ENCODE measurements at regions of chr17 and their contacts with region 1.

Region 1: DNA sequence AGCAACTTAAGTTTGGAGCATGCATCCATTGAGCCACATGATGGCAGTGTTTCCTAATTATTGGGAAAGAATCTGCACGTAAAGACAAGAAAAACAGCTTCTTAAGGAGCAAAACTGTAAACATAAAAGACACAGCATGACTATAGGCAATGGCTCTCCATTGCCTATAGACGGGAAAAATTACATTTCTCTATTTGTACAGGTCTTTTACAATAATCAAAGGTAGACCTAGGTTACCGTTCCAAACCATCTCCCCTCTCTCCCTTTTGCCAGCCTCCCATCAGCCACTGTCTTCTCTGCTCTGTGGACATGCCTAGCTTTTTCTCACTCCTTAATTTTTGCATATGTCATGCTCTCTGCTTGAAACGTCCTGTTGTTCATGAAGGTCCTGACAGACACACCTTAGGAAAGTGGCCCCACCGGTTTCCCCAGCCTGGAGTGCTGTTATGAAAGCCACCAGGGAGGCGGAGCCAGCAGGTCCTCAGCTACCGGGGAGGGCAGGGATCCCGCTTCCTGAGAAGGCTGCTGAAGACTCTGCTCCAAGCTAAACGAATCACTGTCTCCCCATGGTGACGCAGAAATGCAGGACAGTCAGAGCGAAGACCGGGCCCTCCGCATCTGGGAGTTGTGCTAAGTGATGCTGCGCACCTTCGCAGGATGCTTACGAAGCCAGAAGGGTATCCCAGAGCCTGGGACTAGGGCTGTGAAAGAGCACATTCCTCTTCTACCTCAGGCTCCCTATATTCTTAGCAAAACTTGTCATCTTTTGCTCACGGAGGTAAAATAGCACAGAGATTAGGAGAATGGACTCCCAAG is 2.2 kb upstream of the SLC16A11 start:
- DNase-seq: peak; percentile 77
- H3K4me3 Mint-ChIP-seq: no peak overlapping the region
- H3K27ac Mint-ChIP-seq: peak overlapping the region; percentile 32
- H3K4me1 Mint-ChIP-seq: peaks cover 11% of the 10 kb centered on the region
- H3K27me3 Mint-ChIP-seq: no peaks in the 10 kb centered on the region
- CTCF ChIP-seq: peak; percentile 79

Region 2: GRCh38 chr17:7060165-7060891 is 14.2 kb after region 1 on chr17:
- CTCF ChIA-PET with region 1: interaction called, 22 read pairs
- POLR2A ChIA-PET with region 1: no interaction called
- intact Hi-C with region 1: no loop called
- DNase-seq: peak; percentile 90
- H3K4me3 Mint-ChIP-seq: peak overlapping the region; percentile 61
- H3K27ac Mint-ChIP-seq: peak overlapping the region; percentile 92
- H3K4me1 Mint-ChIP-seq: peaks cover 28% of the 10 kb centered on the region
- H3K27me3 Mint-ChIP-seq: no peaks in the 10 kb centered on the region
- CTCF ChIP-seq: no peak

Region 3: GRCh38 chr17:7141824-7142223 is 95.7 kb after region 1 on chr17:
- CTCF ChIA-PET with region 1: interaction called, 124 read pairs
- POLR2A ChIA-PET with region 1: interaction called, 10 read pairs
- intact Hi-C with region 1: no loop called
- DNase-seq: no peak
- H3K4me3 Mint-ChIP-seq: no peak overlapping the region
- H3K27ac Mint-ChIP-seq: no peak overlapping the region
- H3K4me1 Mint-ChIP-seq: no peaks in the 10 kb centered on the region
- H3K27me3 Mint-ChIP-seq: peaks cover 35% of the 10 kb centered on the region
- CTCF ChIP-seq: no peak

Region 4: DNA sequence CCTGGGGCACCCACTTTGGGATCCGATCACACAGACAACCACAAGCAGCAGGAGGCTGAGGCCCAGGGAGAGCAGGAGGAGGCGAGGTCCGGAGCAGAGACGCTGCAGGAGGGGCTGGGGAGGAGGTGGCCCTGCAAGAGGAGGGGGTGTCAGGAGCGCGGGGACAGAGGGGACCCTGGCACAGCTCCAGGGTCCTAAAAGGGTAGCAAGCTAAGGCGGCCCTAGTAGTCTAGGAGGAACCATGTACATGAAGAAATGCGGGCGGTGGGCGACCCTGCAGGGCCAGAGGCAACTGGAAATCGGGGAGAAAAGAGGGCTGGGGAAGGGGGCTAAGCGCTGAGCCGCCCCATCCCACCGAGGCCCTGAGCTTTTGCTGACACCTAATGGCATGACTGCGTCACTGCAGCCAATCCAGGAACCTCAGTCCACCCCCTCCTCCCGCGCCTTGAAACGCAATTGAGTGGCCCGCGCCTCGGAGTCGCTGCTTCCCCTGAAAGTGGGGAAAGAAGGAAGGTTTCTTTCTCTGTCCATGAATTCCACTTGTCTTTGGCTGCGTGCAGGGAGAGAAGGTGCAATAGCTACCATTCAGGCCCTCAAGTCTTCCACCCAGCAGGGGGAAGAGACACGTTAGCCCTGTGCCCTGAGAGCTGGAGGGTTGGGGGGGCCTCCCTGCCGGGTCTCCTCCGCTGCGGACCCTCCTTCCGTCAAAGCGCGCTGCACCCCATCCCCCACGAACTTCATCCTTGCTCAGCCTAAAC is 131.3 kb after region 1 on chr17:
- CTCF ChIA-PET with region 1: interaction called, 33 read pairs
- POLR2A ChIA-PET with region 1: interaction called, 4 read pairs
- intact Hi-C with region 1: no loop called
- DNase-seq: peak; percentile 66
- H3K4me3 Mint-ChIP-seq: peak overlapping the region; percentile 61
- H3K27ac Mint-ChIP-seq: no peak overlapping the region
- H3K4me1 Mint-ChIP-seq: no peaks in the 10 kb centered on the region
- H3K27me3 Mint-ChIP-seq: no peaks in the 10 kb centered on the region
- CTCF ChIP-seq: peak; percentile 88

Region 5: DNA sequence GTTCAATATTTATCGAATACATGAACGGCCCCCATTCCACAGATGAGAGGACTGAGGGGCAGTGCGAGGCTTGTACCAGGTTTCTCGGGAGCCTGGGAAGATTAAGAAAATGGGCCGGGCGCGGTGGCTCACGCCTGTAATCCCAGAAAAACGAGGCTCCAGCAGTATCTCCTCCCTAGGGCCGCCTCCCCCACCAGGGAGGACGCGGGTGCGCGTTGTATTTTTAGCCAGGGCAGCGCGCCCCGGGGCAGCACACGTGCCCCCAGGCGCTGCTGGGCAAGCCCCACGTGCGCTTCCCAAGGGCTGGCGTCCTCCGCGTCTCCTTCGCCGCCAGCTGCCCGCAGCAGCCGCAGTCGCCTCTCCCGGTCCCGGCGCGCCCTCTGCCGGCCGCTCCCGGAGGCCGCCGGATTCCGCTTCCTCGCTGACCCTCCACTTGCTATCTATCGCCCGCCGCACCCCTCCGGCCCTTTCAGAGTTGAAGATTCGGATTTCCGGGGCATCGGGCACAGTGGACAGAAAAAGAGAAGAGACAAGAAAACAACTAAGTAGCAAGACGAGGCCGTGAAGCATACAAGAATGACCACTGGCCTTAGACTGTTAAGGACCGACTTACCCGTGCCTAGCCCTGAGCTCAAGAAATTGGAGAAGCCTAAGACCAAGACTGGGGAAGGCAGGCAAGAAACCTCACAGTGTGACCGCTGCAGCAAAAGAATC is 250.2 kb after region 1 on chr17:
- CTCF ChIA-PET with region 1: interaction called, 12 read pairs
- POLR2A ChIA-PET with region 1: no interaction called
- intact Hi-C with region 1: loop called (anchors 5 kb)
- DNase-seq: peak; percentile 73
- H3K4me3 Mint-ChIP-seq: no peak overlapping the region
- H3K27ac Mint-ChIP-seq: no peak overlapping the region
- H3K4me1 Mint-ChIP-seq: peaks cover 17% of the 10 kb centered on the region
- H3K27me3 Mint-ChIP-seq: no peaks in the 10 kb centered on the region
- CTCF ChIP-seq: peak; percentile 91

Region 6: DNA sequence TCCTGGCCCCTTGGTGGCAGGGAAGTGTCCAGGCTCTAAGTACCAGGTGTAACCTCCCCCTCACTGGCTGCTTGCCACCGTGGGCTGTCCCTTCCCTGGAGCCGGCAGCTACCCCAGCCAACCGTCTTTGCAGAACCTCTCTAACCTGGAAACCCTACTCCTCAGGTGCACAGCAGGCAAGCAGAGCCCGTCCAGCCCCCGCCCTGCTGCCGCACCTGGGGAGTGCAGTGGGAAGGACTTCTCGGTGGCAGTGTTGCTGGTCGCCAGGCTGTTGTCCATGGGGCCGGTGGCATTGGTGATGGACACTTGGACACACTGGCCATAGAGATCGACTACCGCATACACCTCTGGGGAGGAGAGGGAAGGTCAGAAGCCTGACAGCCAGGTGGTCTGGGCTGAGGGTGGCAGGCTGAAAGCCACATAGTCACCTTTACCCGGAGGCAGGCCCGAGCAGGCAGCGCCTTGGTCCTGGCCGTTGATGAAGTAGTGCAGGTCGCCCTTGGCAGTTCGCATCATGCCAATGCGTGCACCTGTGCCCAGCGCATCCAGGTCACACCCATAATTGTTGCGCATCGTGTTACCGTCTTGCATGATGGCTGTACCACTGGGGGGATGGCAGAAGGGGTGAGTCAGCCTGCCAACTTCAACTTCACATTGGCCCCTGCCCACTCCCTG is 276.5 kb after region 1 on chr17:
- CTCF ChIA-PET with region 1: no interaction called
- POLR2A ChIA-PET with region 1: no interaction called
- intact Hi-C with region 1: no loop called
- DNase-seq: no peak
- H3K4me3 Mint-ChIP-seq: no peak overlapping the region
- H3K27ac Mint-ChIP-seq: no peak overlapping the region
- H3K4me1 Mint-ChIP-seq: peaks cover 1% of the 10 kb centered on the region
- H3K27me3 Mint-ChIP-seq: no peaks in the 10 kb centered on the region
- CTCF ChIP-seq: no peak

Measured in MCF 10A (cell line).